ENCODE measurements at regions of chr7 and their contacts with region 1.

Region 1: DNA sequence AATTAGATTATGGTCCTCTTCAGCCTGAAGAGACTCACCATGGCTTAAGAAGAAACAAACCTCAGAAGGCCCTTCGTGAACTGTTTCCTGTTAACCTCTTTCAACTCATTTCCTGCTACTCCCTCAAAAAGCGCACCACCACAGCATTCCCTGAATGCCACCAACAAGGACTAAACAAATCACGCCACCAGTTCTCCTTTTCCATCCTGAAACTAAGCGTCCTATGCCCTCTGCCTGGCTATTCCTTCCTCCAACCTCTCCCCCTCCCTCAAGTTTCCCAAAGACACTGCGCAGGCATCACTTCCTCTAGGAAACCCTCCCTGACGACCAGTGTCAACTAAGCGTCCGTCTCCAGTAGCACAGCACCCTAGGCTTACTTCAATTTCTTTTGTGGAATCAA is 12.0 kb downstream of the YWHAG start:
- DNase-seq: no peak
- H3K4me3 Mint-ChIP-seq: peak overlapping the region; percentile 47
- H3K27ac Mint-ChIP-seq: peak overlapping the region; percentile 89
- H3K4me1 Mint-ChIP-seq: peaks cover 52% of the 10 kb centered on the region
- H3K27me3 Mint-ChIP-seq: no peaks in the 10 kb centered on the region
- CTCF ChIP-seq: no peak

Region 2: DNA sequence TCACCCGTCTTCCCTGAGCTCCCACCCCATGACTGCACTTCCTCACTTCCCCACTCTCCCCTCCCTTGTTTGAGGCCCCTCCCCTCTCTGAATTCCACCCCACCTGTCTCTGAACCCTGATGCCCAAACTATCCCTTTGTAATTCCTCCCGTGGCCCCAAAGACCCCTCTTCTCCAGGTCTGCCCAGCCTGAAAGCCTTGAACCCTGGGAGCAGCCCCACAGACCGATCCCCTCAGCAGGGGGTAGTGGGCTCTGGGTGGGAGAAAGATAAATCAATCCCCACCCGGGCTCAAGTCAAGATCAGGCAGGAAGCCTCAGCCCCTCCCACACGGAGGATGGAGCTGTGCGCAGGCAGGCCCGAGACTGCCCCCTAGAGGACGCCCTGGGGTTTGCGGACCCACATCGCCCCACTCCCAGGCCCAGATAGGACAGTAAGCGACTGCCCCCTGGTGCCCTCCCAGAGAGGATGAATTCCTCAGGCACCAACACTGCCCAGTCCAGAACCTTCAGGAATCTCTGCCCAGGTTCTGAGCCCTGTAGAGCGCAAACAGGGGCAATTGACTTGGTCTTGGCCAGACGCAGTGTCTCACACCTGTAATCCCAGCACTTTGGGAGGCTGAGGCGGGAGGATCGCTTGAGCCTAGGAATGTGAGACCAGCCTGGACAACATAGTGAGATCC is 32.6 kb before region 1 on chr7:
- CTCF ChIA-PET with region 1: no interaction called
- intact Hi-C with region 1: loop called (anchors 2 kb)
- DNase-seq: peak; percentile 93
- H3K4me3 Mint-ChIP-seq: no peak overlapping the region
- H3K27ac Mint-ChIP-seq: no peak overlapping the region
- H3K4me1 Mint-ChIP-seq: peaks cover 17% of the 10 kb centered on the region
- H3K27me3 Mint-ChIP-seq: no peaks in the 10 kb centered on the region
- CTCF ChIP-seq: peak; percentile 96

Region 3: GRCh38 chr7:76359111-76359978 is 12.6 kb after region 1 on chr7:
- CTCF ChIA-PET with region 1: no interaction called
- intact Hi-C with region 1: no loop called
- DNase-seq: peak; percentile 95
- H3K4me3 Mint-ChIP-seq: peak overlapping the region; percentile 90
- H3K27ac Mint-ChIP-seq: peak overlapping the region; percentile 76
- H3K4me1 Mint-ChIP-seq: peaks cover 17% of the 10 kb centered on the region
- H3K27me3 Mint-ChIP-seq: no peaks in the 10 kb centered on the region
- CTCF ChIP-seq: peak; percentile 27